ENCODE measurements at regions of chr7 and their contacts with region 1.

Region 1: DNA sequence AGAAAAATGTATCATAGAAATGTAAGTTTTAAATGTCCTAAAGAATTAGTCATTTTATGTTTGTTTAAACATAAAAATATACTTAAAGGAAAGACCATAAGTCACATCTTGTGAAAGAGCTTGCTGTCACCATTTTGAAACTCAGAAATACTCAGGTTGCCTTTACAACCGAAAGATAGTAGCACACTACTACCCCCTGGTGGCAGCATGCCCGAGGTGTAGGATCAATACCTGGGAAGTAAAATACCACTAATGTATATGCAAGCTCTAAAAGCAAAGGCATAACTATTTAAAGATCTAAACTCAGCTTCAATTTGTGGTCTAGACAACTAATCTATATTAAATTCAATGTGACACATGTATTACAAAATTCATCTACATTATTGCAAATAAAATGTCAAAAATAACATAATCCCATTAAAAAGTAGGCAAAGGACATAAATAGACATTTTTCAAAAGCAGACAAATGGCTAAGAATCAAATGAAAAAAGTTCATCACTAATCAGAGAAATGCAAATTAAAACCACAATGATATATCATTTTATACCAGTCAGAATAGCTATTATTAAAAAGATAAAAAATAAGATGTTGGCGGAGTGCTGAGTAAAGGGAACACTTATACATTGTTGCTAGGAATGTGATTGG is 47.7 kb upstream of the FGL2 start:
- DNase-seq: peak in 1 of 2 donors; percentile 85
- H3K4me3 ChIP-seq: no peak overlapping the region
- H3K27ac ChIP-seq: no peak overlapping the region
- H3K4me1 ChIP-seq: peaks cover 8 to 15% of the 10 kb centered on the region in 2 donors
- H3K27me3 ChIP-seq: no peaks in the 10 kb centered on the region
- CTCF ChIP-seq: peak; percentile 71 to 72 (median 71)

Region 2: DNA sequence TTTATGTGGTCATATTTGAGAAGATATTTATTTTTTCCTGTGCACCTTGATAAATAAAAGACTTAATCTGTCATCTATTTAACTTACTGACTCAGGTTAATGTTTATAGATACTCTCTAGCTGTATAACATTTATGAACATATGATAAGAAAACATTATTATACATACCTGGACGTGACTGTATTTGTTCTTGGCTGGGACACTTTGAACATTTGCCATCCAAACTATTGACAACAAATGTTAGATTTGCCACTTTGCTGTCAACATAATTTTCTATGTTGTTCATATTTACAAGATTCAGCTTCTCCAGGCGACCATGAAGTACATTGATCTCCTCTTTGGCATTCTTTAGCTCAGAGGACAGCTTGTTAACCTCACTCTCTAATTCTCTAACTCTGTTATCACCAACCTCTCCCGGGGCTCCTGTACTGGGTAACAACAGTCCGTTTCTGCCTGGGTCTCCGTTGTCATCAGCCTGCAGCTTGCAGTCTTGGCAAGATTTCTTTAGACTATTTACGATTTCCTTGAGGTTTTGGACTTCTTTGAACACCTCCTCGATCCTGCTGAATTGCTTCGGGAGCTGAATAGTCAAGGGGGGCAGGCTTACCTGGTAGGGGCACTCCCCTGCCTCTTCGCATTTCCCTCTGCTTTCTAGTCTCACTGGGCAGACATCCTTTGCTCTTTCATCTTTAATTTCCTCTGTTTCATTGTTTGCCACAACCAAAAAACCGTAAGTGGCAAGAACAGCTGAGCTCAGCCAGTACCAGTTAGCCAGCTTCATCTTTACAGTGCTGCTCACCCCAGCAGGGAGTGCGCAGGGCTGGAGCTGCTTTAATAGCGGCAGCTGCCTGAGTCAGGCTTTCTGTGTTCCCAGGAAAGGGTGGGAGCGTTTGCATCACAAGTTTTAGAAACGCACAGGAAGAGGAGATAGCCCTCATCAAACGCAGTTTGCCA is 48.0 kb before region 1 on chr7 and contains the start of gene FGL2:
- intact Hi-C with region 1: loop called (anchors 2 kb)
- DNase-seq: peak; percentile 56 to 92
- H3K4me3 ChIP-seq: peak within 1 kb of the TSS; percentile 57 to 74
- H3K27ac ChIP-seq: peak within 1 kb of the TSS; percentile 73 to 82
- H3K4me1 ChIP-seq: peaks cover 0 to 11% of the 10 kb centered on the region in 2 donors
- H3K27me3 ChIP-seq: no peaks in the 10 kb centered on the region
- CTCF ChIP-seq: no peak
- total RNA-seq, gene FGL2: 77.9 TPM